ENCODE measurements at regions of chr16 and their contacts with region 1.

Region 1: GRCh38 chr16:24504472-24505345 is 34.7 kb upstream of the RBBP6 start:
- DNase-seq: peak; percentile 67
- ATAC-seq: peak; percentile 96
- H3K4me3 ChIP-seq: no peak overlapping the region
- H3K27ac ChIP-seq: no peak overlapping the region
- H3K4me1 ChIP-seq: peaks cover 4% of the 10 kb centered on the region; the same call in 1 of the 2 replicates
- H3K27me3 ChIP-seq: peaks cover 0 to 11% of the 10 kb centered on the region in 2 experiments; a peak in 1 of 5 replicates
- CTCF ChIP-seq: peak; percentile 92
- EP300 ChIP-seq: no peak
- POLR2A ChIP-seq: no peak
- RAD21 ChIP-seq: peak; percentile 85

Region 2: DNA sequence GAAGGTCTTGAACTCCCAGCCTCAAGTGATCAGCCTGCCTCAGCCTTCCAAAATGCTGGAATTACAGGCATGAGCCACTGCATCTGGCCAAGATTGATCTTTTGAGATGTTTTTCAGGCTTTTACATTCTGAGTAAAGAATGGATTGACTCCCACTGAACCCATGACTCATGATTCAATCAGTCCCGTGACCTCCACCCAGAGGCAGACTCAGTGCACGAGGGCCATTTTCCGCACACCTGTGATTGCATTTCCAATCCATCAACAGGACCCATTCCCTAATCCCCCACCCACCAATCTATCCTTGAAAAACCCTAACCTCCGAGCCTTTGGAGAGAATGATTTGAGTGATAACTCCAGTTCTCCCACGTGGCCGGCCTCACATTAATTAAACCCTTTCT is 709.3 kb before region 1 on chr16:
- CTCF ChIA-PET with region 1: no interaction called
- POLR2A ChIA-PET with region 1: no interaction called
- in situ Hi-C with region 1: loop called (anchors 10 kb)
- intact Hi-C with region 1: loop called (anchors 5 kb)
- DNase-seq: no peak
- ATAC-seq: no peak
- H3K4me3 ChIP-seq: no peak overlapping the region
- H3K27ac ChIP-seq: no peak overlapping the region
- H3K4me1 ChIP-seq: no peaks in the 10 kb centered on the region
- H3K27me3 ChIP-seq: peaks cover 0 to 6% of the 10 kb centered on the region in 2 experiments; a peak in 3 of 5 replicates
- CTCF ChIP-seq: no peak
- EP300 ChIP-seq: no peak
- POLR2A ChIP-seq: no peak
- RAD21 ChIP-seq: no peak

Region 3: DNA sequence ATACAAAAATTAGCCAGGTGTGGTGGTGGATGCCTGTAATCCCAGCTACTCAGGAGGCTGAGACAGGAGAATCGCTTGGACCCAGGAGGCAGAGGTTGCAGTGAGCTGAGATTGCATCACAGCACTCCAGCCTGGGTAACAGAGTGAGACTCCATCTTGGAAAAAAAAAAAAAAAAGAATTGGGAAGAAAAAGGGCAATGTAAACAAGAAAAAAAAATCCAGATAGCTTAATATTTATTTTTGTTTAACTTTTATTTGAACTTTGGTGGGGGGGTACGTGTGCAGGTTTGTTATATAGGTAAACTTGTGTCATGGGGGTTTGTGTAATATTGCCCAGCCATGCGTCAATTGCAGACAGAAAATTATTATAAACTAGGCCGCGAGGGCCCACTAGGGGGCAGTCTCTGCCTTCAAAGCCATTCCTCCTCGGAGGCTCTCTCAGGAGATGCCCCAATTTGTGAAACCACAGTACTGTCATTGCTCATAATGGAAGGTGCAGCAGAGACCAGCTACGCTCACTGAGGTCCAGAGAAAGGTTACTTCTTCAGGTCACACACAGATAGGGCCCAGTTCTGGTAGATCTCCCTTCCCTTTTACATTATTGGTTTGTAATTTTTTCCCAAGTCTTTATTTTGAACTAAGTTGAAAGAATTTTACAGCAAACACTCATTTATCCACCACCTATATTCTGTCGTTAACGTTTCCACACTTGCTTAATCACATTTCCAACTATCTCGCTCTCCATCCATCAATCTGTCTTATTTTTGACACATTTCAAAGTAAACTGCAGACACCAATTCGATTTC is 462.7 kb before region 1 on chr16:
- CTCF ChIA-PET with region 1: interaction called, 14 read pairs
- POLR2A ChIA-PET with region 1: no interaction called
- in situ Hi-C with region 1: loop called (anchors 5 kb)
- intact Hi-C with region 1: loop called (anchors 1 kb)
- DNase-seq: peak; percentile 50
- ATAC-seq: peak; percentile 80
- H3K4me3 ChIP-seq: no peak overlapping the region
- H3K27ac ChIP-seq: no peak overlapping the region
- H3K4me1 ChIP-seq: no peaks in the 10 kb centered on the region
- H3K27me3 ChIP-seq: no peaks in the 10 kb centered on the region; a peak in 2 of 5 replicates
- CTCF ChIP-seq: peak; percentile 83
- EP300 ChIP-seq: no peak
- POLR2A ChIP-seq: no peak
- RAD21 ChIP-seq: peak; percentile 74; the same call in 1 of the 2 replicates

Region 4: DNA sequence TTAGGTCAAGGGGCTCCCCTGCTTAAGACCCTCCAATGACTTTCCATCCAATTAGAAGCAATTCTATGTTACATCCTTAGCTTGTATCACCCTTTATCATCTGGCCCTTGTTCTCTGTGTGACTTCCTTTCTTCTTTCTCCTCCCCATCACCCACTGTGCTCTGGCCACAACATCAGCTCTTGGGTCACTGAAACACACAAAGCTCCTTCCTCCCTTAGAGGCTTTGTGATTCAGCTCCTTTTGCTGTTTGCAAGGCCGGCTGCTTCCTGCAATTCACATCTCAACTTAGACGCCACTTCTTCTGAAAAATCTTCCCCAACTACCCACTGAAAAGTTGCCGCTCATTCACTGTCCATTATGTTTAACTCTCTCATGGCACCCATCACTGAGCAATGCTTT is 379.5 kb before region 1 on chr16:
- CTCF ChIA-PET with region 1: no interaction called
- POLR2A ChIA-PET with region 1: no interaction called
- in situ Hi-C with region 1: loop called (anchors 10 kb)
- intact Hi-C with region 1: no loop called
- DNase-seq: no peak
- ATAC-seq: no peak
- H3K4me3 ChIP-seq: no peak overlapping the region
- H3K27ac ChIP-seq: no peak overlapping the region
- H3K4me1 ChIP-seq: no peaks in the 10 kb centered on the region
- H3K27me3 ChIP-seq: peaks cover 0 to 16% of the 10 kb centered on the region in 2 experiments; a peak in 2 of 5 replicates
- CTCF ChIP-seq: no peak
- EP300 ChIP-seq: no peak
- POLR2A ChIP-seq: no peak
- RAD21 ChIP-seq: no peak

Region 5: GRCh38 chr16:24353622-24354021 is 151.1 kb before region 1 on chr16:
- CTCF ChIA-PET with region 1: no interaction called
- POLR2A ChIA-PET with region 1: no interaction called
- in situ Hi-C with region 1: no loop called
- intact Hi-C with region 1: no loop called
- DNase-seq: no peak
- ATAC-seq: no peak
- H3K4me3 ChIP-seq: no peak overlapping the region
- H3K27ac ChIP-seq: no peak overlapping the region
- H3K4me1 ChIP-seq: no peaks in the 10 kb centered on the region
- H3K27me3 ChIP-seq: peaks cover 0 to 7% of the 10 kb centered on the region in 2 experiments; a peak in 3 of 5 replicates
- CTCF ChIP-seq: no peak
- EP300 ChIP-seq: no peak
- POLR2A ChIP-seq: no peak
- RAD21 ChIP-seq: no peak

Region 6: DNA sequence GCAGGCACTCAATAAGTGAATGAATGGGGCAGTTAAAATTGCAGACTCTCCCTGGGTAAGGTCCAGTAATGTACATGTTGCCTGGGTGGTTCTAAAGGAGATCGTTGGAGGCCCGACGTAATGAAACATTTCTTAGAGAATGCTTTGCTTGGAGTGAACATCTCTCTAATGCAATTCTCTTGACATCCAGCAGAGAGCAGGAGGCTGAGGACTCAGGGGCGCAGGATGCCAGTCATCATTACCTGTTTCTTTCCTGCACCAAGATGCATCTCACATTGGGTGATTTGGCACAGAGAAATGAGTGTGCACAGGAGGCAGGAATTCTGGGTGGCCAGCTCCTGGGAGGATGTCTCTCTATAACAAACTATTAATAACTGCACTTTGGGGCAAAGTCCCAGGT is 95.7 kb before region 1 on chr16:
- CTCF ChIA-PET with region 1: interaction called, 7 read pairs
- POLR2A ChIA-PET with region 1: no interaction called
- in situ Hi-C with region 1: no loop called
- intact Hi-C with region 1: loop called (anchors 1 kb)
- DNase-seq: no peak
- ATAC-seq: peak; percentile 70
- H3K4me3 ChIP-seq: no peak overlapping the region
- H3K27ac ChIP-seq: no peak overlapping the region
- H3K4me1 ChIP-seq: no peaks in the 10 kb centered on the region
- H3K27me3 ChIP-seq: peaks cover 0 to 3% of the 10 kb centered on the region in 2 experiments; a peak in 3 of 5 replicates
- CTCF ChIP-seq: peak; percentile 41
- EP300 ChIP-seq: no peak
- POLR2A ChIP-seq: no peak
- RAD21 ChIP-seq: no peak